Activated CD8-positive, alpha-beta T cell treated with anti-CD3 and anti-CD28 coated beads for 36 hours (primary cell): ENCODE measurements at regions of chr5 and their contacts with region 1.

Region 1: DNA sequence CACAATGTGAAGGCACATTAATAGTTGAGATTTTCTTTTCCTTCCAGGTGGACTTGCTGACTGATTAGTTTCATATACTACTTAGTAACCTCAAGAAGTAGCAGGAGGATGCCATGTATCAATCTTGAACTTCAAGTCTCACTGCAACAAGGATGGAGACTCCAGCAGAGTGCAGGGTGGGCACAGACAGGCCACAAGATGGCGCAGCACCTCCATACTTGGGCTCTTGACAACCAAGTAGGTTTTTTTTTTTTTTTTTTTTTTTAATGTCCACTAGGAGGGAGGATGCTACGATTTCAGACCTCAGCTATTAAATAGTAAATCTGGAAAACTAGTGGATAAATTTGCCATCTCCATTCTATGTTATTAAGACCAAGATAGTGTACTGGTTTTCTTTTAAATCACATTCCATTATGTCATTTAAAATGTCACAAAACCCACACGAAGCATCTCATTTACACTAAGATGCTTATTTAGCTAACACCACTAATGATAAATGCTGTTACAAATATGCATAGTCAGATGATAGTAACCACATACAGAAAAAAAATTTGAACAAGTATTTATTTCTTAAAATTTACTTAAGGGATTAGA is 58.6 kb downstream of the IL6ST start:
- DNase-seq: peak; percentile 91
- ATAC-seq: peak; percentile 90
- H3K4me3 Mint-ChIP-seq: no peak overlapping the region
- H3K27ac Mint-ChIP-seq: peak overlapping the region; percentile 5
- H3K4me1 Mint-ChIP-seq: peaks cover 5% of the 10 kb centered on the region
- H3K27me3 Mint-ChIP-seq: no peaks in the 10 kb centered on the region
- CTCF ChIP-seq: peak; percentile 86

Region 2: GRCh38 chr5:55903121-55903701 is 33.0 kb before region 1 on chr5:
- CTCF ChIA-PET with region 1: interaction called, 10 read pairs
- POLR2A ChIA-PET with region 1: no interaction called
- intact Hi-C with region 1: no loop called
- DNase-seq: peak; percentile 93
- ATAC-seq: peak; percentile 94
- H3K4me3 Mint-ChIP-seq: peak overlapping the region; percentile 15
- H3K27ac Mint-ChIP-seq: peak overlapping the region; percentile 61
- H3K4me1 Mint-ChIP-seq: peaks cover 27% of the 10 kb centered on the region
- H3K27me3 Mint-ChIP-seq: peaks cover 12% of the 10 kb centered on the region
- CTCF ChIP-seq: no peak

Region 3: DNA sequence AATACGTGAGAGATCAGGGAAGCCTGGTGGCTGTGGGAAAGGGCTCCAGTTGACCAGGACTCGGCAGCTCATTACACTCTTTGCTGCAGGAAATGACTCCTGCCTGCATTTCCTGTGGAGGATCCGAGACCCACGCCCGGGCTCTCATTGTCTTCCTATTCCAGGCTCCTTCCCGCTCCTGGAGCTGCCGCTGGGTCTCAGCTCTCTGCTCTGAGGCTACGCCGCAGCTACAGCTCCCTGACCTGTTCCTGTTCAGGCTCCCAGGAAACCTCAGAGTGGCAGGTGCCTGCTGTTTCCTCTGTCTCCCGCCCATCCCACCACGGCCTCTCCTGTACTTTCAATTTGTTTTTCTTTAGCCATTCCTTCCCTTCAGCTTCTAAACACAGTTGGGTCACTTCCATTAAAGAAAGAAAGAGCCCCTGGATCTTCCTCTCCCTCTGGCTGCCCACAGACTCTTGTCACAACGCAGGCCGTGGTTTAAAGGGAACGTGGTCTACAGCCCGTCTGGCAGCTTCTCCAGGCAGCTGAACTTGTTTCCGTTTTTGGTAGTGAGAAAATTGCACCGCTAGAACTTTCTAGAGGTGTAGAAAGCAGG is 12.9 kb before region 1 on chr5:
- CTCF ChIA-PET with region 1: interaction called, 32 read pairs
- POLR2A ChIA-PET with region 1: interaction called, 4 read pairs
- intact Hi-C with region 1: no loop called
- DNase-seq: peak; percentile 39
- ATAC-seq: peak; percentile 45
- H3K4me3 Mint-ChIP-seq: peak overlapping the region; percentile 75
- H3K27ac Mint-ChIP-seq: peak overlapping the region; percentile 72
- H3K4me1 Mint-ChIP-seq: peaks cover 9% of the 10 kb centered on the region
- H3K27me3 Mint-ChIP-seq: no peaks in the 10 kb centered on the region
- CTCF ChIP-seq: no peak

Region 4: DNA sequence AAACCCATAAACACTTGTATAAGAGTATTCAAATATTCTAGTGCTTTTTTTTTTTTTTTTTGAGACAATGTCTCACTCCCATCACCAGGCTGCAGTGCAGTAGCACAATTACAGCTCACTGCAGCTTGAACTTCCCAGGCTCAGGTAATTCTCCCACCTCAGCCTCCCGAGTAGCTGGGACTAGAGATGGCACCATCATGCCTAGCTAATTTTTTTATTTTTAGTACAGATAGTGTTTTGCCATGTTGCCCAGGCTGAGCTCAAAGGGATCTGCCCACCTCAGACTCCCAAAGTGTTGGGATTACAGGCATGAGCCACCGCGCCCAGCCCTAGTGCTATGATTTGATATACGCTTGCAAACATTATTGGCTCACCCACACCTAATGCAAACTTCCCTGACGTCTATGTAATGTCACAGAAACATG is 46.8 kb after region 1 on chr5:
- CTCF ChIA-PET with region 1: interaction called, 10 read pairs
- POLR2A ChIA-PET with region 1: no interaction called
- intact Hi-C with region 1: no loop called
- DNase-seq: peak; percentile 25
- ATAC-seq: peak; percentile 22
- H3K4me3 Mint-ChIP-seq: peak overlapping the region; percentile 4
- H3K27ac Mint-ChIP-seq: peak overlapping the region; percentile 17
- H3K4me1 Mint-ChIP-seq: peaks cover 63% of the 10 kb centered on the region
- H3K27me3 Mint-ChIP-seq: no peaks in the 10 kb centered on the region
- CTCF ChIP-seq: peak; percentile 34

Region 5: DNA sequence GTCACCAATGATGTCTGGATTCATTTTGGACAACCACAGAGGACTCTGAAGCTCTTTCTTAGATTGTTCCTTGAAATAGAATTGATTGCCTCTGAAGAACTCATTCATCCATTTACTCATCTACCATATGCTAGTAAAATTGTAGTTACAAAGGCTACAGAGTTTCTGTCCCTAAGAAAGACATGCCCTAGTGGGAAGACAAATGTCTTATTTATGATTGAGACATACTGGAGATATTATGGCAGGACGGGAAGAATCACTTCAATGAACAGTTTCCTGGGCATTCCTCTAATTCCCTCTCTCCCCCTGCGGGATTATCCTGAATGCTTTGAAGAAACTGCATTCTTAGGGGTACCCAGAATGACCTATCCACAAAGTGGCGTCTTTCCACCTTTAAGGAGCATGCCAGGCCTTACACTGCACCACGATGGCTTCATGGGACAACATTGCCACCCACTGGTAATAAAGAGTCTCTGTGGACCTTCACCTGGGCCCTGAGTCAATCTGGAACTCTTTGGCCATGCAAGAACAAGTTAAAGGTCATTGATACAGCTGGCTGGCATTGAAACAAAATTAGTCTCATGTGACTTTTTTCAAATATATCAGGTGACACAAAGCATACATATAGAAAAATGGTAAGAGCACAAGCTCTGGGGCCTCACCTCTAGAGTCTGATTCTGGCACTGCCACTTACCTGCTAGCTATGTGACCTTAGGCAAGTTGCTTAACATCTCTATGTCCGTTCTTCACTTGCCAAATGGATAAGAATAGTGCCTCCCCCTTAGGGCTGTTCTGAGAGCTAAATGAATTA is 264.9 kb after region 1 on chr5:
- CTCF ChIA-PET with region 1: interaction called, 106 read pairs
- POLR2A ChIA-PET with region 1: interaction called, 3 read pairs
- intact Hi-C with region 1: loop called (anchors 2 kb)
- DNase-seq: peak; percentile 77
- ATAC-seq: peak; percentile 99
- H3K4me3 Mint-ChIP-seq: no peak overlapping the region
- H3K27ac Mint-ChIP-seq: no peak overlapping the region
- H3K4me1 Mint-ChIP-seq: peaks cover 11% of the 10 kb centered on the region
- H3K27me3 Mint-ChIP-seq: no peaks in the 10 kb centered on the region
- CTCF ChIP-seq: peak; percentile 83

Region 6: GRCh38 chr5:56270568-56271392 is 334.6 kb after region 1 on chr5:
- CTCF ChIA-PET with region 1: interaction called, 11 read pairs
- POLR2A ChIA-PET with region 1: no interaction called
- intact Hi-C with region 1: no loop called
- DNase-seq: peak; percentile 82
- ATAC-seq: peak; percentile 99
- H3K4me3 Mint-ChIP-seq: no peak overlapping the region
- H3K27ac Mint-ChIP-seq: peak overlapping the region; percentile 31
- H3K4me1 Mint-ChIP-seq: peaks cover 18% of the 10 kb centered on the region
- H3K27me3 Mint-ChIP-seq: peaks cover 3% of the 10 kb centered on the region
- CTCF ChIP-seq: peak; percentile 97

Region 7: GRCh38 chr5:56838409-56839039 is 902.3 kb after region 1 on chr5:
- CTCF ChIA-PET with region 1: interaction called, 12 read pairs
- POLR2A ChIA-PET with region 1: no interaction called
- intact Hi-C with region 1: no loop called
- DNase-seq: no peak
- ATAC-seq: peak; percentile 72
- H3K4me3 Mint-ChIP-seq: peak overlapping the region; percentile 51
- H3K27ac Mint-ChIP-seq: peak overlapping the region; percentile 68
- H3K4me1 Mint-ChIP-seq: peaks cover 59% of the 10 kb centered on the region
- H3K27me3 Mint-ChIP-seq: no peaks in the 10 kb centered on the region
- CTCF ChIP-seq: peak; percentile 60